ENCODE measurements at regions of chr1 and their contacts with region 1.

Region 1: DNA sequence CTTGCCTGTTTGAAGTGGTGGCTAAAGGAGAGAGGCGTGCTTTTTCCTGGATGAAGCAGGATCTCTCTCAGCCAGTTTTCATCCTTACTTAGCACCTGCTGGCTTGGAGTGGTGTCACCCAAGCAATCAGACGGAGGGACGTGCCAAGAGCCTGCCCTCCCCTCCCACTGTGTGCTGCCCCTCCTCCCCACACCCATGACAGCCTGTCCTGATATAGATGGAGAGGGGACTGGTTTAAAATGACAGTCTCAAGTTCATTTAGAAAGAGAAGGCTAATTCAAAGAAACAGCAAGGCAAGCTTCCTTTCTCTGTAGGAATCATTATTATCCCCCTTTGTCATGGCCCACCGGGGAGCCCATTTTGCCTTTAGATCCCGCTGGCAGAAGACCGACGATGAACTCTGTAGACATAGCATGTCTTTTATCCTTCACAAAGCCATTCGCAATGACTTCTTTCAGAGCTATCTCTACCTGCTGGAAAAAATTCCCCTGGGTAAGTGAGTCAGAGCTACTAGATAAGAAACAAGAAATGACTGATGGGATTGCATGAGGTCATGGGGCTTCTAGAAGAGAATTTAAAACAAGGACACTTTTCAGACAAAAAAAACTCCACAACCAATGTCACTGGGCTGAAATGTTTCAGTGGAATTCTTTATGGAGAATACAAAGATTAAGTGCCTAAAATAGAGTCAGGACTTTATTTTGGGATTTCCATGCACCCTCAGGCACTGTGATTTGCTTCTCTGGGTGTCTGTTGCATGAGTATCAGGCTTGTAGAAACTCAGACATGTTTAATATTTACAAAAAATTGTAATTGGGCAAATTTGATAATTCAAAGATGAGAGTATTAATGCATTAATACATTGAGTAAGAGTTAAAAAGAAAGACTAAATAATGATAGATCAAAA is at the start of gene NTMT2:
- DNase-seq: peak; percentile 77
- ATAC-seq: peak; percentile 98
- total RNA-seq, gene NTMT2: 5.9 TPM

Region 2: GRCh38 chr1:169753552-169753951 is 392.5 kb before region 1 on chr1:
- intact Hi-C with region 1: no loop called
- DNase-seq: no peak
- ATAC-seq: no peak

Region 3: GRCh38 chr1:170074250-170075157 is 71.5 kb before region 1 on chr1 and contains the start of gene KIFAP3:
- intact Hi-C with region 1: loop called (anchors 10 kb)
- DNase-seq: peak; percentile 98
- ATAC-seq: peak; percentile 100
- total RNA-seq, gene KIFAP3: 20.7 TPM

Measured in left ventricle myocardium superior (tissue), 1 donor.